Calu3 (cell line): ENCODE measurements at regions of chr3 and their contacts with region 1.

Region 1: DNA sequence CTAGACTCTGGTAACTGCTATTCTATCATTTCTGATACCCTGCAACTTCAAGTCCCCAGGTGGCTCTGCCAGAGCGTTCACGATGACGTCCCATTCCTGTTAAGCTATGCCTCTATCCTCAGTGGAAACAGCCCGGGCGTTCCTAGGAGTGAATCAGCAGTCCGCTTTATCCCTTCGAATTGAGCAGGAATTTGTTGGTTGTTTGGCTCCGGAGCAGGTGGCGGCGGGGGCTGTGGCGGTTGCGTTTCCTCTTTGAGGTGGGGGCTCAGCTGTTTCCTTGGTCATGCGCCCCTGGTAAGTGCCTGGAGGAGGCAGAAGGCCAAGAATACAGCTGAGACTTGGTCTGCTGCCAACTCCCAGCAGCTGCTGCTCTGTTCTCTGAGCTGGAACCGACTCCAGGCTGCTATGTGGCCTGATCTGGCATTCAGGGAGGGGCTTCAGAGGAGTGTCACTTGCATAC is 25.2 kb downstream of the ARPP21 start:
- DNase-seq: no peak
- H3K4me3 Mint-ChIP-seq: no peak overlapping the region
- H3K27ac Mint-ChIP-seq: no peak overlapping the region
- H3K4me1 Mint-ChIP-seq: no peaks in the 10 kb centered on the region
- H3K27me3 Mint-ChIP-seq: no peaks in the 10 kb centered on the region
- CTCF ChIP-seq: no peak

Region 2: GRCh38 chr3:33883538-33883950 is 1780.9 kb before region 1 on chr3:
- CTCF ChIA-PET with region 1: no interaction called
- intact Hi-C with region 1: loop called (anchors 5 kb)
- DNase-seq: peak; percentile 41
- H3K4me3 Mint-ChIP-seq: no peak overlapping the region
- H3K27ac Mint-ChIP-seq: no peak overlapping the region
- H3K4me1 Mint-ChIP-seq: no peaks in the 10 kb centered on the region
- H3K27me3 Mint-ChIP-seq: peaks cover 33% of the 10 kb centered on the region
- CTCF ChIP-seq: peak; percentile 46

Region 3: DNA sequence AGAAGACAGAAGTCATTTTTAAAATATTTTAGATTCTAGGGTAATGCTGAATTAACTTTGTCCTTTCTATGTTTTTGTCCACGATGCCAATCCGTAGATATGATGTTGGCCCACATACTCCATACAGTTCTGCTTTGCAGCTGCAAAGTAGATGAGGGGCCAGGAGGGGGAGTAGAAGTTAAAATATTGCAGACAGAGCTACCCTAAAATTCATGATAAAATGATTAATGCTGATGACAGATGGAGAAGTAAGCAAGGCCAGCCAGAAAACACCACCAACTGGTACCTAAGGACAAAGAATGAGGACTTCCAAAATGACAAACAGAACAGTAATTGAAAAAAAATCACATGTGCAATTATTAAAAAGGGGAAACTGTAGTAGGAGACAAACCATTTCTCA is 781.7 kb before region 1 on chr3:
- CTCF ChIA-PET with region 1: interaction called, 4 read pairs
- intact Hi-C with region 1: loop called (anchors 2 kb)
- DNase-seq: peak; percentile 3
- H3K4me3 Mint-ChIP-seq: no peak overlapping the region
- H3K27ac Mint-ChIP-seq: no peak overlapping the region
- H3K4me1 Mint-ChIP-seq: no peaks in the 10 kb centered on the region
- H3K27me3 Mint-ChIP-seq: no peaks in the 10 kb centered on the region
- CTCF ChIP-seq: no peak

Region 4: GRCh38 chr3:35305406-35305805 is 359.1 kb before region 1 on chr3:
- CTCF ChIA-PET with region 1: no interaction called
- intact Hi-C with region 1: loop called (anchors 10 kb)
- DNase-seq: no peak
- H3K4me3 Mint-ChIP-seq: no peak overlapping the region
- H3K27ac Mint-ChIP-seq: no peak overlapping the region
- H3K4me1 Mint-ChIP-seq: no peaks in the 10 kb centered on the region
- H3K27me3 Mint-ChIP-seq: no peaks in the 10 kb centered on the region
- CTCF ChIP-seq: no peak

Region 5: GRCh38 chr3:35484929-35485530 is 179.5 kb before region 1 on chr3:
- CTCF ChIA-PET with region 1: no interaction called
- intact Hi-C with region 1: loop called (anchors 5 kb)
- DNase-seq: no peak
- H3K4me3 Mint-ChIP-seq: no peak overlapping the region
- H3K27ac Mint-ChIP-seq: no peak overlapping the region
- H3K4me1 Mint-ChIP-seq: peaks cover 9% of the 10 kb centered on the region
- H3K27me3 Mint-ChIP-seq: no peaks in the 10 kb centered on the region
- CTCF ChIP-seq: no peak

Region 6: GRCh38 chr3:35883929-35884328 is 219.4 kb after region 1 on chr3:
- CTCF ChIA-PET with region 1: no interaction called
- intact Hi-C with region 1: no loop called
- DNase-seq: no peak
- H3K4me3 Mint-ChIP-seq: no peak overlapping the region
- H3K27ac Mint-ChIP-seq: no peak overlapping the region
- H3K4me1 Mint-ChIP-seq: no peaks in the 10 kb centered on the region
- H3K27me3 Mint-ChIP-seq: peaks cover 5% of the 10 kb centered on the region
- CTCF ChIP-seq: no peak

Region 7: GRCh38 chr3:35908366-35909232 is 244.1 kb after region 1 on chr3:
- CTCF ChIA-PET with region 1: interaction called, 3 read pairs
- intact Hi-C with region 1: loop called (anchors 5 kb)
- DNase-seq: peak; percentile 69
- H3K4me3 Mint-ChIP-seq: no peak overlapping the region
- H3K27ac Mint-ChIP-seq: no peak overlapping the region
- H3K4me1 Mint-ChIP-seq: no peaks in the 10 kb centered on the region
- H3K27me3 Mint-ChIP-seq: no peaks in the 10 kb centered on the region
- CTCF ChIP-seq: peak; percentile 72